IMR-90 (cell line): ENCODE measurements at regions of chr7 and their contacts with region 1.

Region 1: DNA sequence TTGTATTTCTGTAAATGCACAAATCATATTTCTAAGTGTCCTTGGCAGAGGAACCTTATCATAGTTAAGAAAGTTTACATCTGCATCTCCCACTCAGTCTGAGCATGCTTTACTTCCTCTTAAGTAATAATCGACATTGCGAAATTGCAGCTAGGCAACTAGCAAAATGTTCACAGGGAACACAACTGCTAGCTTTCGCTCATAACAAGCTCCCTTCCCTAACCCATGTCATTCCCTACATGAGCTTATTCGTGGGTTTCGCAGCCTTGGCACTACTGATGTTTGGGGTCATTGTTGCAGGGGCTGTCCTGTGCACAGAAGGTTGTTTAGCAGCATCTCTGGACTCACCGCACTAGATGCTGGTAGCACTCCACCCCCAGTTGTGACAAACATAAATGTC is 71.6 kb downstream of the AHR start:
- DNase-seq: peak; percentile 97
- ATAC-seq: peak; percentile 55
- H3K4me3 ChIP-seq: no peak overlapping the region
- H3K27ac ChIP-seq: peak overlapping the region; percentile 99
- H3K4me1 ChIP-seq: peaks cover 27% of the 10 kb centered on the region
- H3K27me3 ChIP-seq: no peaks in the 10 kb centered on the region
- CTCF ChIP-seq: no peak
- POLR2A ChIP-seq: no peak
- RAD21 ChIP-seq: no peak

Region 2: GRCh38 chr7:17474724-17475344 is 104.7 kb after region 1 on chr7:
- CTCF ChIA-PET with region 1: interaction called, 11 read pairs
- POLR2A ChIA-PET with region 1: no interaction called
- dilution Hi-C with region 1: no loop called
- in situ Hi-C with region 1: no loop called
- intact Hi-C with region 1: no loop called
- DNase-seq: no peak
- ATAC-seq: no peak
- H3K4me3 ChIP-seq: no peak overlapping the region
- H3K27ac ChIP-seq: no peak overlapping the region
- H3K4me1 ChIP-seq: no peaks in the 10 kb centered on the region
- H3K27me3 ChIP-seq: no peaks in the 10 kb centered on the region
- CTCF ChIP-seq: no peak; the same call in 1 of the 2 replicates
- POLR2A ChIP-seq: no peak
- RAD21 ChIP-seq: no peak

Region 3: GRCh38 chr7:18408461-18408860 is 1038.4 kb after region 1 on chr7:
- CTCF ChIA-PET with region 1: no interaction called
- POLR2A ChIA-PET with region 1: no interaction called
- dilution Hi-C with region 1: no loop called
- in situ Hi-C with region 1: no loop called
- intact Hi-C with region 1: loop called (anchors 10 kb)
- DNase-seq: peak; percentile 90
- ATAC-seq: peak; percentile 95
- H3K4me3 ChIP-seq: no peak overlapping the region
- H3K27ac ChIP-seq: peak overlapping the region; percentile 58; the same call in 1 of the 2 replicates
- H3K4me1 ChIP-seq: no peaks in the 10 kb centered on the region
- H3K27me3 ChIP-seq: no peaks in the 10 kb centered on the region
- CTCF ChIP-seq: no peak
- POLR2A ChIP-seq: no peak
- RAD21 ChIP-seq: no peak